Ascending aorta (tissue), 2 donors: ENCODE measurements at regions of chr16 and their contacts with region 1.

Region 1: GRCh38 chr16:57185944-57186871 is at the starts of genes PSME3IP1 and RSPRY1:
- DNase-seq: peak; percentile 98 to 99
- H3K4me3 ChIP-seq: peak within 1 kb of the TSS; percentile 78 to 94
- H3K27ac ChIP-seq: peak within 1 kb of the TSS; percentile 95 to 96
- H3K4me1 ChIP-seq: peaks cover 5 to 33% of the 10 kb centered on the region in 2 donors
- H3K27me3 ChIP-seq: no peaks in the 10 kb centered on the region
- CTCF ChIP-seq: no peak
- total RNA-seq, gene PSME3IP1: 32.6 TPM
- total RNA-seq, gene RSPRY1: 29.3 TPM

Region 2: DNA sequence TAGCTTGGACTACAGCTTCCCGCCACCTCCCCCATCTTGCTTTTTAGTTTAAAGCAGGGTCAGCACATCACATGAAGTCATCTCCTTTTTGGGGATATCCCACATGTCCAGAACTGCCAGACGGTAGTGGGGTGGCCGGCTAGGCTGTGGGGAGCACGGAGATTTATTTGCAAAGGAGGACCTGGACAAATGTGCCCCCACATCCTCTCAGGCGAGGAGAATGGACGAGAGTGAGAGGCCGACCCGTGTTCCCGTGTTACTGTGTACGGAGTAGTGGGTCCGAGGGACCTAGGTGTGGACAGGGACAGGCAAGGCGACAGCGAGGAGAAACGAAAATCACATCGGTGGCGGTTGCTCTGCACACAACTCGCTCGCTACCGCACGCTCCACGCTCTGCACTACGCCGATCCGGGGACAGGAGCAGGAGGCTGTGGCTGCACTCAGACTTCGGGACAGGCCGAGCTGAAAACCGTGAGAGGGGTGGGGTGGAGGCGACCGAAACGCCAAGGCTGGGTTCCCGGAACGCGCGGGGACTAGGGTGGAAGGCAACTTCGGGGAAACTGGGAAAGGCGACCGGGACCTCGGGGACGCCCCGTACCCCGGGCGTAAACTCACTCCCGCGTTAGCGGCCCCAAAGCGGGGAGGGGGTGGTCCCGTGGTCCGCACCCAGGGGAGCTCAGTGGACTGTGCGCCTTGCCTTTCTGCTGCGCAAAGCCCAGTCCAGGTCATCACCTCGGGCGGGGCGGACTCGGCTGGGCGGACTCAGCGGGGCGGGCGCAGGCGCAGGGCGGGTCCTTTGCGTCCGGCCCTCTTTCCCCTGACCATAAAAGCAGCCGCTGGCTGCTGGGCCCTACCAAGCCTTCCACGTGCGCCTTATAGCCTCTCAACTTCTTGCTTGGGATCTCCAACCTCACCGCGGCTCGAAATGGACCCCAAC is 548.1 kb before region 1 on chr16 and contains the start of gene MT1A:
- intact Hi-C with region 1: loop called (anchors 10 kb)
- DNase-seq: peak; percentile 50 to 91
- H3K4me3 ChIP-seq: peak within 1 kb of the TSS; percentile 60 to 64
- H3K27ac ChIP-seq: peak within 1 kb of the TSS; percentile 72 to 82
- H3K4me1 ChIP-seq: peaks cover 5 to 16% of the 10 kb centered on the region in 2 donors
- H3K27me3 ChIP-seq: no peaks in the 10 kb centered on the region
- CTCF ChIP-seq: no peak
- total RNA-seq, gene MT1A: 183 TPM

Region 3: GRCh38 chr16:57530104-57530521 is 343.9 kb after region 1 on chr16:
- intact Hi-C with region 1: loop called (anchors 5 kb)
- DNase-seq: peak in 1 of 2 donors; percentile 84
- H3K4me3 ChIP-seq: no peak overlapping the region
- H3K27ac ChIP-seq: peak overlapping the region; percentile 55 to 71
- H3K4me1 ChIP-seq: peaks cover 19 to 29% of the 10 kb centered on the region in 2 donors
- H3K27me3 ChIP-seq: no peaks in the 10 kb centered on the region
- CTCF ChIP-seq: no peak